ENCODE measurements at regions of chr15 and their contacts with region 1.

Region 1: GRCh38 chr15:31241888-31242522 is 84.6 kb upstream of the KLF13 start:
- DNase-seq: peak in 4 of 9 experiments; percentile 19 to 83 (median 55)
- ATAC-seq: peak; percentile 73
- H3K4me3 ChIP-seq: no peak overlapping the region
- H3K4me3 Mint-ChIP-seq: no peak overlapping the region
- H3K27ac ChIP-seq: peak overlapping the region in 1 of 2 experiments; percentile 46
- H3K27ac Mint-ChIP-seq: peak overlapping the region; percentile 16
- H3K4me1 ChIP-seq: peaks cover 26% of the 10 kb centered on the region
- H3K4me1 Mint-ChIP-seq: peaks cover 36% of the 10 kb centered on the region
- H3K27me3 ChIP-seq: no peaks in the 10 kb centered on the region
- H3K27me3 Mint-ChIP-seq: no peaks in the 10 kb centered on the region
- CTCF ChIP-seq: no peak

Region 2: DNA sequence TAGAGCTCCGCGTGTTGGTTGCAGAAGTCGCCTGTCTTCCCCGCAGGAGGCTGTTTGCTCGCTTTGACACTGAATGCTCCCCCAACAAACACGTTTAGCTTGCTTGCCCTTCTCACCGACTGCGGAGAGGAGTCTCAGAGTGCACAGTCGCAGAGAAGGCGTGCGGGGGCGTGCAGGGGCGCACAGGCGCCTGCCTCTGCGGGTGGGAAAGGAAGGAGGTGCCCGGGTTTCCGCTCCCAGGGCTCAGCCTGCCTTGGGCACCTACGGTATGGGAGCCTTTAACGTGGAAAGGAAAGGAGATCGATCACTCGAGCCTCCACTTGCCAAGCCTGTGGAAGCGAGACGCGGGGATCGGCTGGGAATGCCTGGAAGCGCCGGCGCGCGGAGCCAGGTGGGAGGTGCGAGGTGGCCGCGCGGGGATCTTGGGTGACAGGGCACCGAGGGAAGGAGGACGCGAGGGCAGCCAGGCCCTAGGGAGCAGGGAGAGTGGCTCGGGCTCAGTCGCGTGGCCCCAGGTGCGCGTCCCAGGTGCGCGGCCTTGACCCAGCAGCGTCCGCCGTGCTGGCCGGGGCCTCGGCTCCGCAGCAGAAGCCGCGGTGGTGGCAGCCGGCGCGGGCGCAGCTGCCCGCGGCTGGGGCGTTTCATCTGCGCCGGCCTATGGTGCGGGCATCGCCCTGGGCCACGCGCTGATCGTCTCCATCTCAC is 338.4 kb before region 1 on chr15 and contains the start of gene FAN1:
- CTCF ChIA-PET with region 1: no interaction called
- POLR2A ChIA-PET with region 1: no interaction called
- intact Hi-C with region 1: no loop called
- DNase-seq: peak; percentile 41 to 84 (median 71)
- ATAC-seq: peak; percentile 87
- H3K4me3 ChIP-seq: peak within 1 kb of the TSS; percentile 66 to 79
- H3K4me3 Mint-ChIP-seq: peak within 1 kb of the TSS; percentile 97
- H3K27ac ChIP-seq: peak within 1 kb of the TSS; percentile 33 to 37
- H3K27ac Mint-ChIP-seq: peak within 1 kb of the TSS; percentile 79
- H3K4me1 ChIP-seq: peaks cover 6% of the 10 kb centered on the region
- H3K4me1 Mint-ChIP-seq: peaks cover 30% of the 10 kb centered on the region
- H3K27me3 ChIP-seq: no peaks in the 10 kb centered on the region
- H3K27me3 Mint-ChIP-seq: no peaks in the 10 kb centered on the region
- CTCF ChIP-seq: no peak
- total RNA-seq, gene FAN1: 6.7 to 7.6 TPM

Region 3: DNA sequence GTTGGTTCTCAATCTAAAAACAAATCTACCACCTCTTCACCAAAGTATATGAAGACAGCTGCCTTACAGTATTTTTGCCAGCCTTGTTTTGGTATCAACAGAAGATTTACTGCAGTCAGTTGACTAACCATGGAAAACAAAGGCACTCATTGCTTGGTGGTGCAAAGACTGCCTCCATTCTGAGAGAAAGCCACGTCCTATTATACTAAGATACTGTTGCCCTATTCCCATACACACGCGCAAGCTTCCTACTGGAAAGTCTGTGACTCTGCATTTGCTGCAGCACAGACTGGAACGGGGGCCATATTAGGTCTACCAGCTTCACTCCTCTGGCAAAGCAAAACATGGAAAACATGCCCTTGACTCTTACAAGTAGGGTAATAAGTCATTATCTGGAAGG is 268.6 kb before region 1 on chr15:
- CTCF ChIA-PET with region 1: no interaction called
- POLR2A ChIA-PET with region 1: no interaction called
- intact Hi-C with region 1: no loop called
- DNase-seq: no peak
- ATAC-seq: no peak
- H3K4me3 ChIP-seq: no peak overlapping the region
- H3K4me3 Mint-ChIP-seq: no peak overlapping the region
- H3K27ac ChIP-seq: no peak overlapping the region
- H3K27ac Mint-ChIP-seq: no peak overlapping the region
- H3K4me1 ChIP-seq: peaks cover 15% of the 10 kb centered on the region
- H3K4me1 Mint-ChIP-seq: peaks cover 51% of the 10 kb centered on the region
- H3K27me3 ChIP-seq: no peaks in the 10 kb centered on the region
- H3K27me3 Mint-ChIP-seq: no peaks in the 10 kb centered on the region
- CTCF ChIP-seq: no peak

Region 4: DNA sequence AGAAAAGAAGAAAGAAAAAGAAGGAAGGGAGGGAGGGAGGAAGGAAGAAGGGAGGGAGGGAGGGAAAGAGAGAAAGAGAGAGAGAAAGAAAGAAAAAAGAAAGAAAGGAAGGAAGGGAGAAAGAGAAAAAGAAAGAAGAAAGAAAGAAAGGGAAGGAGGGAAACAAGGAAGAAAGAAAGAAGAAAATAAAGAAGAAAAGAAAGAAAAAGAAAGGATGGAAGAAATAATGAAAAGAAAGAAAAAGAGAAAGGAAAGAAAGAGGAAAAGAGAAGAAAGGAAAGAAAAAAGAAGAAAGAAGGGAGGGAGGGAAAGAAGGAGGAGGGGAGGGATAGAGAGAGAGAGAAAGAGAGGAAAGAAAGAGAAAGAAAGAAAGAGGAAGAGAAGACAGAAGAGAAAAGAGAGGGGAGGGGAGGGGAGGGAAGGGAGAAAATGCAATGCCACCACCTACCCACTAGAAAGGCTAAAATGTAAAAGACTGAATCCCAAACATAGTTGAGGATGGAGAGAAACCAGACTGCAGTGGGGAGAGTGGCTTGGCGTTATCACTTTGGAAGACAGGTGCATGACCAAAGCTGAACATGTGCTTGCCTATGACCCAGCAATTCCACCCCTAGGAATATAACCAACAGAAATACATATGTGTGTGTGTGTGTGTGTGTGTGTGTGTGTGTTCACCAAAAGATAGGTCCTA is 17.7 kb after region 1 on chr15:
- CTCF ChIA-PET with region 1: interaction called, 3 read pairs
- POLR2A ChIA-PET with region 1: interaction called, 6 read pairs
- intact Hi-C with region 1: loop called in 1 of 2 experiments (anchors 2 kb)
- DNase-seq: no peak
- ATAC-seq: no peak
- H3K4me3 ChIP-seq: no peak overlapping the region
- H3K4me3 Mint-ChIP-seq: no peak overlapping the region
- H3K27ac ChIP-seq: no peak overlapping the region
- H3K27ac Mint-ChIP-seq: no peak overlapping the region
- H3K4me1 ChIP-seq: peaks cover 49% of the 10 kb centered on the region
- H3K4me1 Mint-ChIP-seq: peaks cover 66% of the 10 kb centered on the region
- H3K27me3 ChIP-seq: no peaks in the 10 kb centered on the region
- H3K27me3 Mint-ChIP-seq: no peaks in the 10 kb centered on the region
- CTCF ChIP-seq: no peak

Region 5: GRCh38 chr15:31824024-31824423 is 582.0 kb after region 1 on chr15:
- CTCF ChIA-PET with region 1: no interaction called
- POLR2A ChIA-PET with region 1: no interaction called
- intact Hi-C with region 1: no loop called
- DNase-seq: no peak
- ATAC-seq: no peak
- H3K4me3 ChIP-seq: no peak overlapping the region
- H3K4me3 Mint-ChIP-seq: no peak overlapping the region
- H3K27ac ChIP-seq: no peak overlapping the region
- H3K27ac Mint-ChIP-seq: no peak overlapping the region
- H3K4me1 ChIP-seq: no peaks in the 10 kb centered on the region
- H3K4me1 Mint-ChIP-seq: no peaks in the 10 kb centered on the region
- H3K27me3 ChIP-seq: no peaks in the 10 kb centered on the region
- H3K27me3 Mint-ChIP-seq: peaks cover 9% of the 10 kb centered on the region
- CTCF ChIP-seq: no peak